K562 (cell line): ENCODE measurements at regions of chr6 and their contacts with region 1.

Region 1: DNA sequence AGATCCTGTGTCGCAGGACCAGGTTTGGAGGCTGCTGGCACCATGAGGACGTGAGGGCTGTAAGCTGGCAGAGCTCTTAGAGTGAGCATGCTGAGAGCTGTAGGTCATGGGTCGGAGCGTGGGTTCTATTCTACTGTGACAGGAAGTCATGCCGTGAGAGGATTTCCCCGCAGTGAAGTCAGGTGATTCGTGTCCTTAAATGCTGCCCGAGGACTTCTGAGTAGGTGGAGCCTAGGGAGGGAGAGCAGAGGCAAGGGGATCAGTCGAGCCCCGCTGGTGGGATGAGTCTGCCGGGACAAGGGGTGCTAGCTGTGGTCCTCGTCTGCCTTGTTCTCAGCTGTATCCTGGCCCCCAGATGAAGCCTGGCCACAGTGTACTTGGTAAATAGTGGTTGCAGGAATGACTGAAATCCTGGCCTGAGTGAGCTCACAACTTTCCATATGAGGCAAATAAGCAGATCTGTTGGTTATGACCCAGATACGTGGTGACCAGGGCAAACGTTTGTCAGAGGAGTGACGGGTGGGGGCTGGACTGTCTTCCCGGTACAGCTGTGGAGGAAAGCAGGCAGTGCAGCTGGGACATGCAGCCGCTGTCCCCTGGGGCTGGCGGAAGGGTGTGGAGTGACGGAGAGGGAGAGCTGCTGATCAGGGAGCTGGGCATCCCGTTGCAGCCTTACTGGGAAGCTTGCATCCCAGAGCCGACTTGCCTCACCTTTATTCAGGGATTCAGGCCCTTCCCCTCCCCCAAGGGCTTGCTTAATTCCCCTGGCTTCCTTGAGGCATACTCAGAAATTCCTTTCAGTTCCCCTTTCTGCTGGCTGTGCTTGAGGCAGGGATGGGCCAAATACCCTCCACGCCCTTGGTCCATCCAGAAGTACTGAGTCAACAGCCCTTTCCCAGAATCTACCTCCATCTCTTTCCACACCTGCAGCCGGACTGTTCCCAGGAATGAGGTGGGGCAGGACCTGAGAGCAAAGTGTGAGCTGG is 250.9 kb upstream of the RREB1 start:
- DNase-seq: no peak
- ATAC-seq: no peak
- H3K4me3 ChIP-seq: no peak overlapping the region
- H3K27ac ChIP-seq: no peak overlapping the region
- H3K4me1 ChIP-seq: peaks cover 33 to 36% of the 10 kb centered on the region in 2 experiments
- H3K27me3 ChIP-seq: no peaks in the 10 kb centered on the region
- CTCF ChIP-seq: no peak
- EP300 ChIP-seq: no peak
- POLR2A ChIP-seq: no peak
- RAD21 ChIP-seq: no peak

Region 2: GRCh38 chr6:7042056-7042653 is 185.3 kb after region 1 on chr6:
- CTCF ChIA-PET with region 1: no interaction called
- POLR2A ChIA-PET with region 1: no interaction called
- in situ Hi-C with region 1: no loop called
- intact Hi-C with region 1: loop called (anchors 5 kb)
- DNase-seq: peak; percentile 40 to 65 (median 50)
- ATAC-seq: peak; percentile 53
- H3K4me3 ChIP-seq: no peak overlapping the region
- H3K27ac ChIP-seq: peak overlapping the region; percentile 74
- H3K4me1 ChIP-seq: peaks cover 13 to 38% of the 10 kb centered on the region in 2 experiments
- H3K27me3 ChIP-seq: no peaks in the 10 kb centered on the region
- CTCF ChIP-seq: no peak
- EP300 ChIP-seq: no peak
- POLR2A ChIP-seq: no peak
- RAD21 ChIP-seq: no peak; a peak in 1 of 4 replicates